Endothelial cell of umbilical vein (primary cell): ENCODE measurements at regions of chr3 and their contacts with region 1.

Region 1: GRCh38 chr3:107676469-107677309 is 153.9 kb downstream of the BBX start:
- DNase-seq: peak; percentile 42
- H3K4me3 ChIP-seq: no peak overlapping the region
- H3K27ac ChIP-seq: no peak overlapping the region
- H3K4me1 ChIP-seq: no peaks in the 10 kb centered on the region
- H3K27me3 ChIP-seq: no peaks in the 10 kb centered on the region
- CTCF ChIP-seq: peak; percentile 20 to 31
- POLR2A ChIP-seq: no peak

Region 2: GRCh38 chr3:107643038-107643883 is 33.4 kb before region 1 on chr3:
- CTCF ChIA-PET with region 1: interaction called, 10 read pairs
- POLR2A ChIA-PET with region 1: no interaction called
- dilution Hi-C with region 1: no loop called
- intact Hi-C with region 1: no loop called
- DNase-seq: no peak
- H3K4me3 ChIP-seq: no peak overlapping the region
- H3K27ac ChIP-seq: no peak overlapping the region
- H3K4me1 ChIP-seq: peaks cover 8% of the 10 kb centered on the region
- H3K27me3 ChIP-seq: no peaks in the 10 kb centered on the region
- CTCF ChIP-seq: no peak
- POLR2A ChIP-seq: no peak

Region 3: GRCh38 chr3:107704477-107704876 is 27.8 kb after region 1 on chr3:
- CTCF ChIA-PET with region 1: interaction called, 13 read pairs
- POLR2A ChIA-PET with region 1: no interaction called
- dilution Hi-C with region 1: no loop called
- intact Hi-C with region 1: no loop called
- DNase-seq: no peak
- H3K4me3 ChIP-seq: no peak overlapping the region
- H3K27ac ChIP-seq: no peak overlapping the region
- H3K4me1 ChIP-seq: no peaks in the 10 kb centered on the region
- H3K27me3 ChIP-seq: no peaks in the 10 kb centered on the region
- CTCF ChIP-seq: no peak
- POLR2A ChIP-seq: no peak

Region 4: DNA sequence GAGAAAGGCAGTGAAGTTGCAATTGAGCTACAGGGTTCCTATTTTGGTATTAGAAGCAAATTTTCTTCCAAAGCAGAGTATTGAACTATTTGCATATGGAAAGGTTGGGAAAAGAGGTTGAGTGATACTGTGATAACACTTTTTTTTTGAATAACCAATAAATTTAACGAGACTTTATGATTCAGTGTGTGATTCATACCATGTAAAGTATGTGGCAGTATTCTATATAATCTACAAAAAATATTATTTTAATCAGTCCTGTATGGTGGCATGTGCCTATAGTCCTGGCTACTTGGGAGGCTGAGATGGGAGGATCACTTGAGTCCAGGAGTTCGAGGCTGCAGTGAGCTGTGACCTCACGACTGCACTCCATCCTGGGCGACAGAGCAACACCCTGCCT is 53.0 kb after region 1 on chr3:
- CTCF ChIA-PET with region 1: interaction called, 15 read pairs
- POLR2A ChIA-PET with region 1: no interaction called
- dilution Hi-C with region 1: no loop called
- intact Hi-C with region 1: no loop called
- DNase-seq: no peak
- H3K4me3 ChIP-seq: no peak overlapping the region
- H3K27ac ChIP-seq: no peak overlapping the region
- H3K4me1 ChIP-seq: no peaks in the 10 kb centered on the region
- H3K27me3 ChIP-seq: no peaks in the 10 kb centered on the region
- CTCF ChIP-seq: no peak
- POLR2A ChIP-seq: no peak

Region 5: GRCh38 chr3:107753480-107753879 is 76.8 kb after region 1 on chr3:
- CTCF ChIA-PET with region 1: interaction called, 71 read pairs
- POLR2A ChIA-PET with region 1: no interaction called
- dilution Hi-C with region 1: no loop called
- intact Hi-C with region 1: loop called (anchors 2 kb)
- DNase-seq: peak; percentile 47
- H3K4me3 ChIP-seq: no peak overlapping the region
- H3K27ac ChIP-seq: no peak overlapping the region
- H3K4me1 ChIP-seq: no peaks in the 10 kb centered on the region
- H3K27me3 ChIP-seq: no peaks in the 10 kb centered on the region
- CTCF ChIP-seq: peak; percentile 29 to 52
- POLR2A ChIP-seq: no peak